RWPE1 (cell line): ENCODE measurements at regions of chr6 and their contacts with region 1.

Region 1: DNA sequence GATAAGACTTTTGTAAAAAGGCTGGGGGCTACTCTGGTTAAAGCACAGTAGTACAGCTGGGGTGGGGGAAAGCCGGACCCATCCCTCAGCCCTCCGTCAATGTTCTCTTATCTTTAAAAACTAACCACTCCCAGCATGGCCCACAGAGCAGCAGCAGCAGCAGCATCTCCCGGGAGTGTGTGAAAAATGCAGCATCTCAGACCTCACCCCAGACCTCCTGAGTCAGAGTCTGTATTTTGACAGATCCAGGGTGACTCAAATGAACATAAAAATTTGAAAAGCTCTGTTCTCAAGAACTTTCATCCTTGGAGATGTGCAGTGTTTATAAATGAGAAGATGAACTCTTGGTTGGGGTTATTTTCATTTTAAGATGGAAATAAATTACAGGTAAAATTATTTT is 277.7 kb upstream of the ECI2 start:
- DNase-seq: no peak
- H3K27ac ChIP-seq: no peak overlapping the region
- CTCF ChIP-seq: no peak

Region 2: GRCh38 chr6:4553387-4553786 is 140.3 kb after region 1 on chr6:
- CTCF ChIA-PET with region 1: interaction called, 10 read pairs
- POLR2A ChIA-PET with region 1: no interaction called
- DNase-seq: no peak
- H3K27ac ChIP-seq: no peak overlapping the region
- CTCF ChIP-seq: no peak